Activated B cell treated with CpG ODN at 0.5 μM for 24 hours (primary cell): ENCODE measurements at regions of chr20 and their contacts with region 1.

Region 1: DNA sequence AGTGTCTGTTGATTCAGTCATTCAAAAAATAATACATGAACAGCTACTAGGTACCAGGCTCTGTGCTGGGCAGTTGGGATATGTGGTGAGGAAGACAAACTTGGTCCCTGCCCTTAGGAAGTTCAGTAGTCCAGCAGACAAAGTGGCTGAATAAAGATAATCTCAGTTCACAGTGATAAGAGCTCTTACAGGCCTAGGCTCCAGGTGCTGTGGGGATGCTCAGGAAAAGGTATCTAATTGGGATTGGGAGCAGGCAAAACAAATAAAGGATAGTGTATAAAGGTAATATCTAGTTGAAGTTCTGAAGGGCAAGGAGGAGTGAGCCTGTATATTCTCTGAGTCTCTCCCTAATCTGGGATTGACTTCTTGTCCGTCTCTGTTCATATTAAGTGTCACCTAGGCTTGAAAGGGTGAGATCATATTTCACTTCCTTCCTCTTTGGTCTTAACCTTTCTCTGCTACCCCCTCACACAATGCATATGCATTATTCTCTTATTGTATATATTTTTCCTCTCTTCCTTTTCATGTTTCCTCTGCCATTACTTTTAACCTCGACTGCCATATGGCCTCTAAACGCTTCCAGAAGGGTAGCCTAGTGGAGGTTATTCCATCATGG is 13.5 kb downstream of the PTPN1 start:
- DNase-seq: no peak
- ATAC-seq: peak; percentile 41
- H3K4me3 Mint-ChIP-seq: peak overlapping the region; percentile 73
- H3K27ac Mint-ChIP-seq: peak overlapping the region; percentile 89
- H3K4me1 Mint-ChIP-seq: peaks cover 55% of the 10 kb centered on the region
- H3K27me3 Mint-ChIP-seq: no peaks in the 10 kb centered on the region
- CTCF ChIP-seq: no peak

Region 2: GRCh38 chr20:50534567-50535551 is 11.2 kb after region 1 on chr20:
- CTCF ChIA-PET with region 1: interaction called, 3 read pairs
- POLR2A ChIA-PET with region 1: interaction called, 1,679 read pairs
- intact Hi-C with region 1: loop called (anchors 1 kb)
- DNase-seq: no peak
- ATAC-seq: no peak
- H3K4me3 Mint-ChIP-seq: no peak overlapping the region
- H3K27ac Mint-ChIP-seq: peak overlapping the region; percentile 24
- H3K4me1 Mint-ChIP-seq: peaks cover 79% of the 10 kb centered on the region
- H3K27me3 Mint-ChIP-seq: no peaks in the 10 kb centered on the region
- CTCF ChIP-seq: no peak

Region 3: DNA sequence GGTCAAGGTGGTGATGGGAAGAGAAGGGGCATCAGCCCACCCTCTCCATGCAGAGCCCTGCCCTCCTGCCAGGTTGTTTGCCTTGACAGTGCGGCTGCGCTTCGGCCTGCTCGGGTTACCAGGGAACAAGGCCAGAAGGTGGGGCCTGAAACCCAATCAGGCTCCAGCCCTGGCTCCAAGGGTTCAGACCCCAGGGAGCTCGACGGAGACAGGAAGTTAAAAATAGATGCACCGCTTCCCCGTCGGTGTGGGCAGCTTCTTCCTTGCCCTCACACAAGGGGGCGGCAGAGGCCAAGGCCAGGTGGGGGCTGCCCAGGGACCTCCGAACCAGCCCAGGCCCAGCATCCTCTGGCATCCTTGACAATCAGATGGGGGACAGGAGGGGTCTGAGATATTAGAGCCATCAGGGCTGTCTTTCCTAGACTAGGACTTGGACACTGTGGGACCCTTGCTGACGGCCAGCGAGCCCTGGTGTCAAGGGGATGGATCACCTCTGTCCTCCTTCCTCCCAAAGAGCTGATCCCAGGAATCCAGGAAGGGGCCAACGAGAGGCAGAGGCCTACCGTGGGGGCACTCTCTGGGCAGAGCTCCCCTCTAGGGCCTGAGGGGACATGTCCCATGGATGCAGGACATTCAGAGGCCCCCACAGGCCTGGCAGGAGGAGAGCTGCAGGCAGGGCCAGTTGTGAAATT is 102.5 kb after region 1 on chr20:
- CTCF ChIA-PET with region 1: no interaction called
- POLR2A ChIA-PET with region 1: no interaction called
- intact Hi-C with region 1: no loop called
- DNase-seq: no peak
- ATAC-seq: no peak
- H3K4me3 Mint-ChIP-seq: no peak overlapping the region
- H3K27ac Mint-ChIP-seq: no peak overlapping the region
- H3K4me1 Mint-ChIP-seq: no peaks in the 10 kb centered on the region
- H3K27me3 Mint-ChIP-seq: peaks cover 6% of the 10 kb centered on the region
- CTCF ChIP-seq: no peak